Heart left ventricle (tissue), 16 donors: ENCODE measurements at regions of chr10 and their contacts with region 1.

Region 1: GRCh38 chr10:99595770-99596465 is 24.3 kb downstream of the SLC25A28 start:
- DNase-seq: no peak
- ATAC-seq: no peak
- H3K4me3 ChIP-seq: no peak overlapping the region
- H3K27ac ChIP-seq: no peak overlapping the region
- H3K4me1 ChIP-seq: no peaks in the 10 kb centered on the region
- H3K27me3 ChIP-seq: no peaks in the 10 kb centered on the region
- CTCF ChIP-seq: no peak
- POLR2A ChIP-seq: no peak

Region 2: GRCh38 chr10:99444383-99445045 is 151.4 kb before region 1 on chr10:
- intact Hi-C with region 1: loop called in 1 of 10 experiments (anchors 5 kb)
- DNase-seq: no peak
- ATAC-seq: no peak
- H3K4me3 ChIP-seq: no peak overlapping the region
- H3K27ac ChIP-seq: no peak overlapping the region
- H3K4me1 ChIP-seq: no peaks in the 10 kb centered on the region
- H3K27me3 ChIP-seq: peaks cover 0 to 16% (median 0%) of the 10 kb centered on the region in 9 donors
- CTCF ChIP-seq: no peak
- POLR2A ChIP-seq: no peak